GM12878 (cell line): ENCODE measurements at regions of chr1 and their contacts with region 1.

Region 1: DNA sequence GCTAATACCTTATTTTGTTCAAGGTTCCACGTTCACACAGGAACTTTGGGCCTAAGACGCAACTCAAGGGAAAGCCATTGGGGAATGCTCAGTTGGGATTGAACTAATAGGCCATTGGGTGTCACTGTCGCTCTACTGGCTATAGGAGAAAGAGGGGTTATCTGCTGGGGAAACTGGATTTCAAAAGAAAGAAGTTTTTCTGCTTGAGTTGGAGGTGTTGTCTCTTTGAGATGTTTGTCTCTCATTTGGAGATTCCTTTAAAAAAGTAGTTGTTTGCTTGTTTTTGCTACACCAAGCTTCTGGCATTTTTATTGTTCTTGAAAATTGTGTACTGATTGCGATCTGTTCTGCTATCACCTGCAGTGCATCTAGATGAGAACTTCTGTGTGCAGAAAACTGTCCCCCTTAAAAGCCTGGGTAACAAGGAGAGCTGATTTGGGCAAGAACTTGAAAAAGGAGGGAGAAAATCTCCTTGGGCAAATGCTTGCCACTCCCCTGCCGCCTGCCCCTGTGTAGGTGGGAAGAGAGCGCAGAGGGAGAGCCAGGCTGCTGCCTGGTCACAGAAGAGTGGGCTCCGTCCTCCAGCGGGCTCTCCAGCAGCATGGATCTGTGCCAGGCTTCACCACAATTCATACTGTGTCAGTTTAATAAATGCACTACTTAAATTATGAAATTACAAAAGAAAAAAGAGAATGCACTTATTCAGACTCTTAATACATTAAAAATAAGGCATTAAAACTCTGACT is 39.9 kb downstream of the PEX14 start:
- DNase-seq: no peak
- ATAC-seq: no peak
- H3K4me3 ChIP-seq: no peak overlapping the region
- H3K27ac ChIP-seq: peak overlapping the region; percentile 86
- H3K4me1 ChIP-seq: peaks cover 68% of the 10 kb centered on the region
- H3K27me3 ChIP-seq: no peaks in the 10 kb centered on the region
- CTCF ChIP-seq: peak; percentile 56 to 71 (median 60); a peak in 5 of 6 replicates
- EP300 ChIP-seq: no peak
- POLR2A ChIP-seq: no peak
- RAD21 ChIP-seq: peak; percentile 78

Region 2: GRCh38 chr1:10236405-10237156 is 278.1 kb before region 1 on chr1:
- CTCF ChIA-PET with region 1: no interaction called
- POLR2A ChIA-PET with region 1: no interaction called
- RAD21 ChIA-PET with region 1: no interaction called
- SMC1A ChIA-PET with region 1: no interaction called
- in situ Hi-C with region 1: no loop called
- intact Hi-C with region 1: no loop called
- DNase-seq: no peak
- ATAC-seq: peak; percentile 77
- H3K4me3 ChIP-seq: no peak overlapping the region
- H3K27ac ChIP-seq: peak overlapping the region; percentile 32; the same call in 1 of the 2 replicates
- H3K4me1 ChIP-seq: peaks cover 16% of the 10 kb centered on the region
- H3K27me3 ChIP-seq: no peaks in the 10 kb centered on the region
- CTCF ChIP-seq: no peak
- EP300 ChIP-seq: no peak
- POLR2A ChIP-seq: no peak
- RAD21 ChIP-seq: no peak

Region 3: GRCh38 chr1:10438677-10439163 is 75.9 kb before region 1 on chr1:
- CTCF ChIA-PET with region 1: no interaction called
- POLR2A ChIA-PET with region 1: no interaction called
- RAD21 ChIA-PET with region 1: no interaction called
- SMC1A ChIA-PET with region 1: no interaction called
- in situ Hi-C with region 1: no loop called
- intact Hi-C with region 1: no loop called
- DNase-seq: no peak
- ATAC-seq: no peak
- H3K4me3 ChIP-seq: no peak overlapping the region
- H3K27ac ChIP-seq: no peak overlapping the region
- H3K4me1 ChIP-seq: peaks cover 3% of the 10 kb centered on the region; the same call in 1 of the 2 replicates
- H3K27me3 ChIP-seq: no peaks in the 10 kb centered on the region
- CTCF ChIP-seq: no peak
- EP300 ChIP-seq: no peak
- POLR2A ChIP-seq: no peak
- RAD21 ChIP-seq: no peak

Region 4: DNA sequence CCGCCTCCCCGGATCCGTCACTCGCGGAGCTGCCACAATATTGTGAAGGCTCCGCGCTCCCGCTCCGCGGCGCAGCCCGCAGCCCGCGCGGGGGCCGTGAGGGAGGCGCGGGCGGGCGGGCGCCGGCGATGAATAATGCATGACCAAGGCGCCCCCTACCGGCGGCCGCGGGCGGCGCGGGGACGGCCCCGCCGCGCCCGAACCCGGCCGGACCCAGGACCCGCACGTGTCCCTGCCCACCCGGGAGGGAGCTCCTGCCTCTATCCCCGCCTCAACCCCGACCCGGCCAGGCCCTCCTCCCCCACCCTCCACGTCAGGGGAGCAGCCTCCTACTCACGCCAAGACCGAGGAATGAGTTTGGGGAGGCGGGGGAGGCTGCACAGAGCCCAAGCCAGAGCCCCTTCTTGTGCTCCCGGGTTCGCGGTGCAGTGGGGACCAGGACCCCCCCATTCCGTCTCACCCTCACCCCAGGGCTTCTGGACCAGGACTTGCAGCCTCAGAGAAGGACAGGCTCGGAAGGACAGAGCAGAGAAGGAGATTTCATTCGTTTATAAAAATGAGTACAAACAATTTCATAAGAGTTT is 352.6 kb after region 1 on chr1:
- CTCF ChIA-PET with region 1: interaction called, 6 read pairs
- POLR2A ChIA-PET with region 1: no interaction called
- RAD21 ChIA-PET with region 1: interaction called, 4 read pairs
- SMC1A ChIA-PET with region 1: interaction called, 11 read pairs
- in situ Hi-C with region 1: loop called (anchors 5 kb)
- intact Hi-C with region 1: loop called (anchors 2 kb)
- DNase-seq: no peak
- ATAC-seq: peak; percentile 96
- H3K4me3 ChIP-seq: peak overlapping the region; percentile 20; the same call in 1 of the 2 replicates
- H3K27ac ChIP-seq: no peak overlapping the region
- H3K4me1 ChIP-seq: 0 out of 2 replicates have a peak, but pooled peaks cover 5% of the 10 kb centered on the region
- H3K27me3 ChIP-seq: peaks cover 2 to 6% of the 10 kb centered on the region in 2 experiments; a peak in 3 of 4 replicates
- CTCF ChIP-seq: peak; percentile 41 to 68 (median 51); a peak in 5 of 6 replicates
- EP300 ChIP-seq: no peak
- POLR2A ChIP-seq: no peak
- RAD21 ChIP-seq: peak; percentile 67